ENCODE measurements at regions of chr3 and their contacts with region 1.

Region 1: DNA sequence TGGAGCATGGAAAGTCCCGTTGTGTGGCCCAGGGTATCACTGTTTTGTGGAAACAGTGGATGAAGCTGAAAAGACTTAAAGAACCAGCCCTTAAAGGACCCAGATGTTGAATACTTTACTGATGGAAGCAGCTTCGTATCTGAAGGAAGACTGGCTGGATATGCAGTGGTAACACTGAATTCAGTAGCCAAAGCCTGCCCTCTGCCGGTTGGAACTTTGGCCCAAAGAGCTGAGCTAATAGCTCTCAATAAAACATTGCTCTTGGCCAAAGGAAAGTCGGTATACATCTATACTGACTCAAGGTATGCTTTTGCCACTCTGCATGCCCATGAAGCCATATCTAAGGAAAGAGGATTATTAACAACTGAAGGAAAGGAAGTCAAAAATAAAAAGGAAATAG is 885.4 kb downstream of the PDCD6IP start:
- DNase-seq: peak in 7 of 10 donors; percentile 10 to 64 (median 53)
- H3K4me3 ChIP-seq: no peak overlapping the region
- H3K27ac ChIP-seq: no peak overlapping the region
- H3K27me3 ChIP-seq: no peaks in the 10 kb centered on the region
- CTCF ChIP-seq: peak in 53 of 56 donors; percentile 17 to 77 (median 51)

Region 2: GRCh38 chr3:33883538-33883950 is 800.3 kb before region 1 on chr3:
- intact Hi-C with region 1: loop called (anchors 5 to 10 kb)
- DNase-seq: peak in 2 of 10 donors; percentile 21 to 32
- H3K4me3 ChIP-seq: peak overlapping the region in 50 of 59 donors; percentile 3 to 61 (median 40)
- H3K27ac ChIP-seq: peak overlapping the region in 42 of 59 donors; percentile 14 to 82 (median 60)
- H3K27me3 ChIP-seq: no peaks in the 10 kb centered on the region
- CTCF ChIP-seq: peak; percentile 79 to 97 (median 92)

Region 3: GRCh38 chr3:34284958-34285826 is 398.7 kb before region 1 on chr3:
- intact Hi-C with region 1: no loop called
- DNase-seq: no peak
- H3K4me3 ChIP-seq: no peak overlapping the region
- H3K27ac ChIP-seq: peak overlapping the region in 5 of 59 donors; percentile 8 to 41 (median 14)
- H3K27me3 ChIP-seq: no peaks in the 10 kb centered on the region
- CTCF ChIP-seq: no peak

Region 4: DNA sequence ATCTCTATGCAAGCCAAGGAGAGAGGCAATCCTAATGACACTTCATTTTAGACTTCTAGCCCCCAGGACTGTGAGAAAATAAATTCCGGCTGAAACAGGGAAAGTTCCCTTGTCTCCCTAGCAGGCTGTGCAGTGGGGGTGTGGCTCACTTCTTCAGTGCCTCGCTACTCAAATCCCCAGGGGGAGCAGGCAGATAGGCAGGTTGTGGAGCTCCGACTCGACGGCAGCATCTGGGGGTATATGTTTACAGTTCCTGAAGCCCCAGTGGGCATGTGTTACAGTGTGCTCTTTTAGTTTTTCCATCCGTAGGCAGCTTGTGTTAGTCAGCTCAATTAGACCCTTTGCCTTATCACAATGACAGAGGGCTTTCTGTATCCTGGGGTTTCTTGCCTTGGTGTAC is 48.9 kb before region 1 on chr3:
- intact Hi-C with region 1: no loop called
- DNase-seq: no peak
- H3K4me3 ChIP-seq: no peak overlapping the region
- H3K27ac ChIP-seq: no peak overlapping the region
- H3K27me3 ChIP-seq: no peaks in the 10 kb centered on the region
- CTCF ChIP-seq: no peak

Measured in dorsolateral prefrontal cortex (tissue), 120 donors.